GM23248 (cell line): ENCODE measurements at regions of chr4 and their contacts with region 1.

Region 1: DNA sequence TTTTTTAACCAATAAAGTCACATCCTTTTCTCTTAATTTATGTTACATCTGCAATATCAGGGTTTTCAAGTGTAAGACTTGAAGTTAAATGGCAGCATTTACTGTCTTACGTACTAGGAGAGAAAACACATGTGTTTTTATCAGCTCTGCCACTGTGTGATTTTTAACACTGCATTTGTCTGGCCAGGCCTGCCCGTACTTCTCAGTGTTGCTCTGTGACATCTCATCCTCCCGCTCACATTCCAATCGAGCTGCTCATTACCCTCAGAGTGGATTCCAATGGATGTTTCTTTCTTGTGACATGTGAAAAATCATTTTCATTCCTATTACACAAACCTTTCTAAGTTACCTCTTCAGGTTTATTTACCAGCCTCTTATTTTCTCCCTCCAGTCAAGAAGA is 420.3 kb downstream of the FAT4 start:
- DNase-seq: peak; percentile 89
- H3K4me3 ChIP-seq: 0 out of 2 replicates have a peak overlapping the region, but pooled peaks have one; percentile 4
- H3K27ac ChIP-seq: peak overlapping the region; percentile 83
- H3K4me1 ChIP-seq: peaks cover 34% of the 10 kb centered on the region
- H3K27me3 ChIP-seq: no peaks in the 10 kb centered on the region

Region 2: DNA sequence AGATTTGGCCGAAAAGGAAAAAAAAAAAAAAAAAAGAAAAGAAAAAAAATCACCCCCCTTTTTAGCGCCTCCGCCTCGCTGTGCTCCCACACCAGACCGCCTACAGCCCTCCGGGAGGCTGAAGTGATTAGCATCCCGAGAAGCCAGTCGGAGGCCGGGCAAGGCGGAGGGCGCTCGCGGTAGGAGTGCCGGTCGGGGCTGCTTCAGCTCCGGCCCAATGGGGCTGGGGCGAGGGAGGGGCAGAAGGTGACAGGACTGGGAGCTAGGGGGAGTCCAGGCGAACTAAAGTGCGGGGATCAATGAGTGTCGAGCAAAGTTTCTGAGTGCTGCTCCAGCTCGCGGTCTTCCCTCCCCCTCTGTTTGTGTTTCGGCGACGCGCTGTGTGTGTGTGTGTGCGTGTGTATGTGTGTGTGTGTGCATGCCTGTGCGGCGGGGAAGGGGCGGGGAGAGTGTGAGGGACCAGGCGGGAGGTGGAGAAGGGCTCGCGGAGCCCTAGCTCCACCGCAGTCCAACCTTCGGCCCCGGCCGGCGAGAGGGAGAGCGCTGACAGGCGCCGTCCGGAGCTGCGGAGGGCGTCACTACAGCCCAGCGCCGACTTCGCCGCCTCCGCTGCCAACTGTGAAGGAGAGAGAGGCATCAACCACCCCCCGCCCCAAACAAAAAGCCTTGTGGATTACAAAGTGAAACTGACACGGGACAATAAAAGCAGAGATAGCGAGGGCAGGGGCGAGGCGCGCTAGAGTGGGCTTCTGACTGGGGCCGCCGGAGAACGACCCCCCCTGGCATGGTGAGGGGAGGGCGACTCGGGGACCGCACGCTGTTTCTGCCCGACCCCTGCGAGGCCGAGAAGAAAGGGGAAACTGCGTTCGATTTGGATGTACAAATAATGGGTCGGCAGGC is 420.2 kb before region 1 on chr4 and contains the start of gene FAT4:
- in situ Hi-C with region 1: loop called (anchors 10 kb)
- DNase-seq: peak; percentile 99
- H3K4me3 ChIP-seq: peak within 1 kb of the TSS; percentile 92
- H3K27ac ChIP-seq: peak within 1 kb of the TSS; percentile 65
- H3K4me1 ChIP-seq: peaks cover 31% of the 10 kb centered on the region
- H3K27me3 ChIP-seq: no peaks in the 10 kb centered on the region
- total RNA-seq, gene FAT4: 22.0 and 22.4 TPM in 2 replicates

Region 3: GRCh38 chr4:125483278-125483677 is 251.8 kb before region 1 on chr4:
- in situ Hi-C with region 1: no loop called
- DNase-seq: no peak
- H3K4me3 ChIP-seq: no peak overlapping the region
- H3K27ac ChIP-seq: no peak overlapping the region
- H3K4me1 ChIP-seq: no peaks in the 10 kb centered on the region
- H3K27me3 ChIP-seq: no peaks in the 10 kb centered on the region

Region 4: GRCh38 chr4:126414741-126415140 is 679.6 kb after region 1 on chr4:
- in situ Hi-C with region 1: no loop called
- DNase-seq: no peak
- H3K4me3 ChIP-seq: no peak overlapping the region
- H3K27ac ChIP-seq: no peak overlapping the region
- H3K4me1 ChIP-seq: no peaks in the 10 kb centered on the region
- H3K27me3 ChIP-seq: no peaks in the 10 kb centered on the region

Region 5: GRCh38 chr4:126451237-126451873 is 716.3 kb after region 1 on chr4:
- in situ Hi-C with region 1: no loop called
- DNase-seq: peak; percentile 63
- H3K4me3 ChIP-seq: no peak overlapping the region
- H3K27ac ChIP-seq: no peak overlapping the region
- H3K4me1 ChIP-seq: no peaks in the 10 kb centered on the region; the same call in 1 of the 2 replicates
- H3K27me3 ChIP-seq: no peaks in the 10 kb centered on the region